Dendritic cell treated with granulocyte-macrophage colony-stimulating factor and Interleukin-4, amounts not matched to agents 40 ng/mL and 50 ng/mL, for 4 days (primary cell): ENCODE measurements at regions of chr2 and their contacts with region 1.

Region 1: DNA sequence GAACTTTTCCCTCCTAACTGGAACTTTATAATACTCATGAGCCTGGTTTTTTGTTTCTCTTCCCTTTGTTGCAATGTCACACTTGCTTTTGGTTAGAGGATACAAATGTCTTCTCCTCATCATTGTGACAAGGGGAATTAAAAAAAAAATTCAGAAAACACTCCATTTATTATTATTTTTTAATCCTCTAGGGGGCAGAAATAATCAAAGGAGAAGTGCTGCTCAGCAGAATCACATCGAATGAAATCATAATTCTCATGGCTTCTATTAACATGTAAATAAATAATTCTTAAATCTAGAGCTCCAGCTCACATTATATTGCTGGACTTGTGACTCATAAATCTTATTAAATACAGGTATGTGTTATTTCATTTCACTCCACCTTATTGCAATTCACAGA is 273.8 kb downstream of the TRIB2 start:
- H3K4me3 Mint-ChIP-seq: no peak overlapping the region
- H3K27ac Mint-ChIP-seq: no peak overlapping the region
- H3K4me1 Mint-ChIP-seq: peaks cover 5% of the 10 kb centered on the region
- H3K27me3 Mint-ChIP-seq: peaks cover 2% of the 10 kb centered on the region

Region 2: DNA sequence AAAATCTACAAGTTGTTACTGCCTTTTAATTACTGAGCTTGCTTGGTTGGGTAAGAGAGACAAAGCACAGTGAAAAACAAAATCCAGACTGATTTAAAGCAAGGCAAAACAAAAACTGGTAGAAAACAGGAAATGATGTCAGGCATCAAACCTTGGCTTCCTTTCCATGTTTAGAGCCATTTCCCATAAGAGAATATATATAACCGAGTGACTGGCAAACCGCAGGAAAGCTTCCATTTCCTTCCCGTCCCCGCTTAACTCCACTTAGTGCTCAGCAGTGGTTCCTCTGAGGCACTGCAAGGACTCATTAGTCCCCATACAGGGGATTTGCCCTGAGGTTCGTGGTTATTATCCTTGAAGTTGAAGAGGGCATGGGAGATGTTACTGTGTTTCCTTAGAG is 797.8 kb before region 1 on chr2:
- intact Hi-C with region 1: loop called (anchors 10 kb)
- H3K4me3 Mint-ChIP-seq: no peak overlapping the region
- H3K27ac Mint-ChIP-seq: no peak overlapping the region
- H3K4me1 Mint-ChIP-seq: peaks cover 9% of the 10 kb centered on the region
- H3K27me3 Mint-ChIP-seq: peaks cover 12% of the 10 kb centered on the region